Dendritic cell treated with granulocyte-macrophage colony-stimulating factor and Interleukin-4, amounts not matched to agents 40 ng/mL and 50 ng/mL, for 4 days (primary cell): ENCODE measurements at regions of chr7 and their contacts with region 1.

Region 1: GRCh38 chr7:26365077-26365900 is 73.6 kb downstream of the SNX10 start:
- H3K4me3 Mint-ChIP-seq: no peak overlapping the region
- H3K27ac Mint-ChIP-seq: no peak overlapping the region
- H3K4me1 Mint-ChIP-seq: peaks cover 12% of the 10 kb centered on the region
- H3K27me3 Mint-ChIP-seq: no peaks in the 10 kb centered on the region

Region 2: DNA sequence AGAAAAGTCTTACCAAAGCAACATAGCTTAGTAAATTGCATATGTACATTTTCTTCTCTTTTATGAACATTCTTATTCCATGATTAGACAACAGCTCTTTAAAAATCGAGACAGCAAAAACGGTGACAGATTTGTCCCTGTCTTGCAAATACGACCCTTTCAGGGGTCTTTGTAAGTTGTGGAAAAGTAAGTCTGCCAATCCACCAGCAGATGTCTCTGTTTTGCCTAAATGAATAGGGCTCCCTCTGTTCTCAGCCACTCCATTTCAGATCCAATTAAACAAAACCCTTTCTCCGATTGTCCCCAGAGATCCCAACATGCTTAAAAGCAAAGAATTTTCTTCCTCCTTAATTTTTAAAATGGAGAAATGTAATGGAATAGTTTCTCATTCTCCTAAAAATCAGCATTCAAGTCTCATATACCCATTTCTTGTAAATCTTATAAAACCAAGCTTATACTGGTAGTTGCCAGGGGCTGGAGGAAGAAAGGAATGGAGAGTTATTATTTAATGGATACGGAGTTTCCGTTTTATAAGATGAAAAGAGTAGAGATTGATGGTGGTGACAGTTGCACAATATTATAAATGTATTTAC is 274.3 kb before region 1 on chr7:
- intact Hi-C with region 1: loop called (anchors 1 kb)
- H3K4me3 Mint-ChIP-seq: peak overlapping the region; percentile 26
- H3K27ac Mint-ChIP-seq: peak overlapping the region; percentile 52
- H3K4me1 Mint-ChIP-seq: peaks cover 33% of the 10 kb centered on the region
- H3K27me3 Mint-ChIP-seq: no peaks in the 10 kb centered on the region

Region 3: GRCh38 chr7:26278770-26279169 is 86.5 kb before region 1 on chr7:
- intact Hi-C with region 1: loop called (anchors 1 kb)
- H3K4me3 Mint-ChIP-seq: no peak overlapping the region
- H3K27ac Mint-ChIP-seq: no peak overlapping the region
- H3K4me1 Mint-ChIP-seq: no peaks in the 10 kb centered on the region
- H3K27me3 Mint-ChIP-seq: peaks cover 1% of the 10 kb centered on the region

Region 4: GRCh38 chr7:26479581-26479980 is 114.3 kb after region 1 on chr7:
- intact Hi-C with region 1: no loop called
- H3K4me3 Mint-ChIP-seq: no peak overlapping the region
- H3K27ac Mint-ChIP-seq: no peak overlapping the region
- H3K4me1 Mint-ChIP-seq: no peaks in the 10 kb centered on the region
- H3K27me3 Mint-ChIP-seq: no peaks in the 10 kb centered on the region

Region 5: GRCh38 chr7:26667500-26668133 is 302.3 kb after region 1 on chr7:
- intact Hi-C with region 1: loop called (anchors 1 kb)
- H3K4me3 Mint-ChIP-seq: no peak overlapping the region
- H3K27ac Mint-ChIP-seq: no peak overlapping the region
- H3K4me1 Mint-ChIP-seq: peaks cover 6% of the 10 kb centered on the region
- H3K27me3 Mint-ChIP-seq: no peaks in the 10 kb centered on the region